ENCODE measurements at regions of chr16 and their contacts with region 1.

Region 1: DNA sequence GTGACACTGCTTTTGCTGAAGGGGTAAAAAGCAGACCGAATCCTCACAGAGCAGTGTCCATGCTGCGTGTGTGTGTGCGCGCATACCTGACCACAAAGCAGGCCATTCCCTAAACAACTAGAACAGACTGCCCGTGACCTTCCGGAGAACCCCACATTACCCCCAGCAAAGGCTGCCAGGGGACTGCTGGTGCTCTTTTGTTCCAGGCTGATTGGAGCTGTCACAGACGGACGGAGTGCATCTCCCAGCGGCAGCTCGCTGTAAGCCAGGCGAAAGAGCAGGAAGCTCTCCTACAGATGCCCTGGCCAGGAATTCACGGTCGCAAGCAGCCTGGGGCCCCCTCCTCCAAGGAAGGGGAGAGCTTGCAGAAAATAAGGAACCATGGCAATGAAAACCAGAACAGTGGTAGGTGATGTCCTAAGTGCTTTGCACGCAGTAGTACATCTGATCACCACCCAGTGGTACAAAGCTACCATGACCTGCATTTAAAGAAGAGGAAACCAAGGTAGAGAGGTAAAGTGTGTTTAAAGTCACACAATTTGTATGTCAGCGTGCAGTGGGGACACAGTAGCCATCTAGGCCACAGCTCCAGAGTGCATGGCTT is 153.4 kb upstream of the DYNLRB2 start:
- DNase-seq: no peak
- H3K4me3 ChIP-seq: no peak overlapping the region
- H3K27ac ChIP-seq: no peak overlapping the region
- H3K4me1 ChIP-seq: no peaks in the 10 kb centered on the region
- H3K27me3 ChIP-seq: no peaks in the 10 kb centered on the region
- CTCF ChIP-seq: no peak
- POLR2A ChIP-seq: no peak

Region 2: GRCh38 chr16:80407265-80407987 is 20.0 kb after region 1 on chr16:
- intact Hi-C with region 1: no loop called
- DNase-seq: no peak
- H3K4me3 ChIP-seq: no peak overlapping the region
- H3K27ac ChIP-seq: no peak overlapping the region
- H3K4me1 ChIP-seq: no peaks in the 10 kb centered on the region
- H3K27me3 ChIP-seq: no peaks in the 10 kb centered on the region
- CTCF ChIP-seq: no peak
- POLR2A ChIP-seq: no peak

Region 3: DNA sequence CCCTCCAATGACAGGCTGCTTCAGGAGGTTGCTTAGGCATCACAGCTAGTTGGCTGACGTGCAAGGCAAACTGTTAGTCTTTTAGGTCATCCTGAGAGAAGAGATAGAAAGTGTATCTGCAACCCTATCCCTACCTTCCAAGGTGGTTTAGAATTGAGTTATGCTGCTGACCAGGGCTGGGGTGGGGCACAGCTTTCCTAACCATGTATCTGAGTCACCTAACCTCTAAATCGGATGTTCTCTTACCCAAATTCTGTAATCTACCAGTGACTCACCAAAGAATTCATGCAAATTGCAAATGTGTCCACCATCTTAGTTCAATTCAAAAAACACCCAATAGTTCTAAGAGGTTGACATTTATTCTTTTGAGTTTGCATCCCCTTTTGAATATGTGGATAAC is 46.2 kb after region 1 on chr16:
- intact Hi-C with region 1: loop called (anchors 2 kb)
- DNase-seq: no peak
- H3K4me3 ChIP-seq: no peak overlapping the region
- H3K27ac ChIP-seq: no peak overlapping the region
- H3K4me1 ChIP-seq: no peaks in the 10 kb centered on the region
- H3K27me3 ChIP-seq: no peaks in the 10 kb centered on the region
- CTCF ChIP-seq: no peak
- POLR2A ChIP-seq: no peak

Region 4: DNA sequence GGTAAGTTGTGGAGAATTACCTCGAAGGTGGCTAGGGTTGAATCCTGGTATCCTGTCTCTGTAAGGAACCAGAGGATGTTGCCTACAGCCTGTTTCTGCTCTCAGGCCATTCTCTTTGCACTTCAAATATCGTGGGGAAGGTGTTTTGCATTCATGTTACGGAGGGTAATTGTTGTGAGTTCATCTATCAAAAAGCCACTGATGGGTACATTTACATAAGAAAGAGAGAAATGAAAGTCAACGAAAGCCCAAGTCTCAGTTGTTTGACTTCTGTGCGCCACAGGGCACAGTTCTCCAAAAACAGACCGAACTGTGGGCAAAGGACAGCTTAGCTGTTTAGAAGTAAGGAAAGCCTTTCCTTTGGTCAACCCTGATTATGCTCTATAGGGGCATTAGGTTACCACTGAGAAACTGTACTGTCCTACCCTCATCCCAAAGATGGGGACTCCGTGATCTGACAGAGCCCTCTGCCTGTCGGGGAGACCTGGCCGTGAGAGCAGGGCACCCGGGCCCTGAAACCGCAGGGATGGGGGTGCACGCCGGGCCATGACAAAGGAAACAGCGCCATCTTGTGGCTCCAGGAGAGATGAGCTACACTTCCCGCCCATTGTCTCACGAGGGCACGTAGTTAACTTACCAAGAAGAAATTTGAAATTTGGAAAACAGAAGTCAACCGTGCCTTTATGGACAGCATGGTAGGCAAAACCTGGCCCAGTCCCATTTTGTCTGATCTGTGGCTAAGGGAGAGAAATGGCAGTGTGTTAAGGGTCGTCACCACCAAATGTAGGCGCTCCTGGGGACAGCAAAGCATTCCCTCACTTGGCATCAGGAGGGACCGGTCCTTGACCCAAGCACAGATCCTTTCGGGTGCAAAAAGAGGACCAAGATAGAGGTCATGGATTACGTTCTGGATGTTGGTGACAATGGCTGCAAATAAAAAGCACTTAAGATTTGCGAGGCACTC is 78.9 kb after region 1 on chr16:
- intact Hi-C with region 1: no loop called
- DNase-seq: peak; percentile 48 to 61
- H3K4me3 ChIP-seq: peak overlapping the region in 1 of 3 donors; percentile 17
- H3K27ac ChIP-seq: no peak overlapping the region
- H3K4me1 ChIP-seq: no peaks in the 10 kb centered on the region
- H3K27me3 ChIP-seq: no peaks in the 10 kb centered on the region
- CTCF ChIP-seq: peak; percentile 72 to 88 (median 82)
- POLR2A ChIP-seq: no peak

Measured in breast epithelium (tissue), 4 donors.